Caco-2 (cell line): ENCODE measurements at regions of chr3 and their contacts with region 1.

Region 1: DNA sequence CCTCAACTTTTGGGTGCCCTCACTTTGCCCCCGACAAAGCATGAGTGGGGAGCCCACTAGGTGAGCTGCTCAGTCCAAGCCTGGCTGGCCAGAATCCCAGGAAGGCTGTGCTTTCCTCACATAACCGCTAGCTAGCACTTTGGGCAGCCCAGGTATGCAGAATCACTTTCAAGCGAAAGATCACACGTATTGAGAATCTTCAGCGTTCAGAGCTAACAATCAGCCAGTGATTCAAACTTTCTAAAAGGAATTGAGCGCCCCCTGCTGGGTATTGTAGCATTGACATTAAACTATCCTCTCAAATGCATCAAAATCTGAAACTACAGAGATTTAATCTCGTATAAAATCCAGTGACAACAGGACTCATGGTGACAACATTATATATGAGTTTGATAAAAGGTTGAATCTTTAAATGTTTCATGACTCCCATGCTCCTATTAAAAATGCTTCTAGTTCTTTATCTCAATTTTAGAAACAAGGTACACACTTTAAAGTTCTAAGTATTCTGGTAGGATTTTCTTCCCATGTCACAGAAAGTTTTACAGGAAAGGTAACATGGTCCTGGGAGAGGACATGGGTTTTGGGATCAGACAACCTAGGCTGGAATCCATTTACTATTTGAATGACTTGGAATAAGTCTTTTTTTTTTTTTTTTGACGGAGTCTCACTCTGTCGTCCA is 11.8 kb downstream of the ANAPC13 start:
- DNase-seq: peak; percentile 77 to 84
- H3K4me3 ChIP-seq: no peak overlapping the region
- H3K4me3 Mint-ChIP-seq: no peak overlapping the region
- H3K27ac Mint-ChIP-seq: no peak overlapping the region
- H3K4me1 ChIP-seq: peaks cover 39% of the 10 kb centered on the region
- H3K4me1 Mint-ChIP-seq: peaks cover 10% of the 10 kb centered on the region
- H3K27me3 ChIP-seq: no peaks in the 10 kb centered on the region
- H3K27me3 Mint-ChIP-seq: no peaks in the 10 kb centered on the region
- CTCF ChIP-seq: peak; percentile 70 to 78

Region 2: GRCh38 chr3:134197681-134198261 is 276.2 kb before region 1 on chr3:
- CTCF ChIA-PET with region 1: interaction called, 3 read pairs
- POLR2A ChIA-PET with region 1: no interaction called
- intact Hi-C with region 1: loop called (anchors 5 kb)
- DNase-seq: peak in 1 of 2 experiments; percentile 47
- H3K4me3 ChIP-seq: no peak overlapping the region
- H3K4me3 Mint-ChIP-seq: no peak overlapping the region
- H3K27ac Mint-ChIP-seq: no peak overlapping the region
- H3K4me1 ChIP-seq: no peaks in the 10 kb centered on the region
- H3K4me1 Mint-ChIP-seq: no peaks in the 10 kb centered on the region
- H3K27me3 ChIP-seq: no peaks in the 10 kb centered on the region
- H3K27me3 Mint-ChIP-seq: no peaks in the 10 kb centered on the region
- CTCF ChIP-seq: peak; percentile 70 to 71

Region 3: GRCh38 chr3:134346744-134347143 is 127.3 kb before region 1 on chr3:
- CTCF ChIA-PET with region 1: no interaction called
- POLR2A ChIA-PET with region 1: no interaction called
- intact Hi-C with region 1: no loop called
- DNase-seq: peak in 1 of 2 experiments; percentile 6
- H3K4me3 ChIP-seq: no peak overlapping the region
- H3K4me3 Mint-ChIP-seq: no peak overlapping the region
- H3K27ac Mint-ChIP-seq: no peak overlapping the region
- H3K4me1 ChIP-seq: peaks cover 41% of the 10 kb centered on the region
- H3K4me1 Mint-ChIP-seq: peaks cover 43% of the 10 kb centered on the region
- H3K27me3 ChIP-seq: no peaks in the 10 kb centered on the region
- H3K27me3 Mint-ChIP-seq: no peaks in the 10 kb centered on the region
- CTCF ChIP-seq: no peak

Region 4: GRCh38 chr3:134364061-134364935 is 109.7 kb before region 1 on chr3:
- CTCF ChIA-PET with region 1: interaction called, 29 read pairs
- POLR2A ChIA-PET with region 1: interaction called, 11 read pairs
- intact Hi-C with region 1: no loop called
- DNase-seq: peak; percentile 95 to 97
- H3K4me3 ChIP-seq: 0 out of 2 replicates have a peak overlapping the region, but pooled peaks have one; percentile 6
- H3K4me3 Mint-ChIP-seq: peak overlapping the region; percentile 70
- H3K27ac Mint-ChIP-seq: peak overlapping the region; percentile 82
- H3K4me1 ChIP-seq: peaks cover 95% of the 10 kb centered on the region
- H3K4me1 Mint-ChIP-seq: peaks cover 42% of the 10 kb centered on the region
- H3K27me3 ChIP-seq: no peaks in the 10 kb centered on the region
- H3K27me3 Mint-ChIP-seq: no peaks in the 10 kb centered on the region
- CTCF ChIP-seq: no peak

Region 5: GRCh38 chr3:134373994-134374790 is 99.8 kb before region 1 on chr3 and contains the start of gene AMOTL2:
- CTCF ChIA-PET with region 1: interaction called, 13 read pairs
- POLR2A ChIA-PET with region 1: interaction called, 5 read pairs
- intact Hi-C with region 1: loop called (anchors 1 kb)
- DNase-seq: peak; percentile 97
- H3K4me3 ChIP-seq: peak within 1 kb of the TSS; percentile 92
- H3K4me3 Mint-ChIP-seq: peak within 1 kb of the TSS; percentile 85
- H3K27ac Mint-ChIP-seq: peak within 1 kb of the TSS; percentile 77
- H3K4me1 ChIP-seq: peaks cover 61% of the 10 kb centered on the region
- H3K4me1 Mint-ChIP-seq: peaks cover 43% of the 10 kb centered on the region
- H3K27me3 ChIP-seq: no peaks in the 10 kb centered on the region
- H3K27me3 Mint-ChIP-seq: no peaks in the 10 kb centered on the region
- CTCF ChIP-seq: no peak
- total RNA-seq, gene AMOTL2: 220 and 271 TPM in 2 replicates

Region 6: DNA sequence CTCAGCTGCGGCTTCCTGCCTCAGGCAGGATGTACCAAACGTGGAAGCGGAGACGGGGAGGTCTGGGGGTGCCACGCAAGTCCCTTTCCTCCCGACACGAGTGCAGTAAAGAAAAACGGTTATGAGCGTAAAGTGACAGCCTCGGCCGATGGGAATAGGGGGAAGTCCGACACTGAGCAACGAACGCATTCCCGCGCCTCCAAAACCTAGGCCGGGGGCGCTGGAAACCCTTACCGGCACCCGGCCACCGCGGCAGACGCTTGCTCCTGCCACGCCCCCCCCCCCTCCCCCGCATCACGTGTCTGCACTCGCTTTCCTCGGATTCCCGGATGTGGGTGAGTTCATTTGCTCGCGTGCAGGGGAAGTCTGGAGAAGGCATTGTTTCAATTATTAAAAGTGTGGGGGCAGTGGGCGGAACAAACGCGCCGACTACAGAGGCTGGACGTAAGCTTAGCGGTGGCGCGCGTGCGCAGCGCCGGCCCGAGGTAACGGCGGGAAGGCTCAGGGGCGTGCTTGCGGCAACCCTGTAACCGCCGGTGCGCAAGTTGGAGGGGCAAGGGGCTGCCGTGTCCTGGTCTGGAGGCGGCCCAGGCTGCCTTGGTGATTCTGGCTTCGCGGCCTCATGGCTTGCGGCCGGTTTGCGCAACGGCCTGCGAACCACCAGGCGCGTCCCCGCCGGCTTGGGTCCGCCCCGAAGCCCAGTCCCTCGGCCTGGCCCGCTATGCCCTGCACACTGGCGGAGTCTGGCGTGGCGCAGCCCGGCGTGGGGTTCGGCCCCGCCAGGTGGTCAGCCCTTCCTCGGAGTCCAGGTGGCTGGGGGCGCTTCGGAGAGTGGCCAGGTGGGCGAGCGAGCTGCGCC is 11.9 kb after region 1 on chr3 and contains the starts of genes ANAPC13 and CEP63:
- CTCF ChIA-PET with region 1: interaction called, 8 read pairs
- POLR2A ChIA-PET with region 1: interaction called, 10 read pairs
- intact Hi-C with region 1: no loop called
- DNase-seq: peak; percentile 95 to 98
- H3K4me3 ChIP-seq: peak within 1 kb of the TSS; percentile 72
- H3K4me3 Mint-ChIP-seq: peak within 1 kb of the TSS; percentile 71
- H3K27ac Mint-ChIP-seq: peak within 1 kb of the TSS; percentile 51
- H3K4me1 ChIP-seq: no peaks in the 10 kb centered on the region
- H3K4me1 Mint-ChIP-seq: peaks cover 10% of the 10 kb centered on the region
- H3K27me3 ChIP-seq: no peaks in the 10 kb centered on the region
- H3K27me3 Mint-ChIP-seq: no peaks in the 10 kb centered on the region
- CTCF ChIP-seq: no peak
- total RNA-seq, gene ANAPC13: 47.6 and 57.0 TPM in 2 replicates
- total RNA-seq, gene CEP63: 21.3 and 21.9 TPM in 2 replicates